Common myeloid progenitor, CD34-positive (primary cell): ENCODE measurements at regions of chr1 and their contacts with region 1.

Region 1: DNA sequence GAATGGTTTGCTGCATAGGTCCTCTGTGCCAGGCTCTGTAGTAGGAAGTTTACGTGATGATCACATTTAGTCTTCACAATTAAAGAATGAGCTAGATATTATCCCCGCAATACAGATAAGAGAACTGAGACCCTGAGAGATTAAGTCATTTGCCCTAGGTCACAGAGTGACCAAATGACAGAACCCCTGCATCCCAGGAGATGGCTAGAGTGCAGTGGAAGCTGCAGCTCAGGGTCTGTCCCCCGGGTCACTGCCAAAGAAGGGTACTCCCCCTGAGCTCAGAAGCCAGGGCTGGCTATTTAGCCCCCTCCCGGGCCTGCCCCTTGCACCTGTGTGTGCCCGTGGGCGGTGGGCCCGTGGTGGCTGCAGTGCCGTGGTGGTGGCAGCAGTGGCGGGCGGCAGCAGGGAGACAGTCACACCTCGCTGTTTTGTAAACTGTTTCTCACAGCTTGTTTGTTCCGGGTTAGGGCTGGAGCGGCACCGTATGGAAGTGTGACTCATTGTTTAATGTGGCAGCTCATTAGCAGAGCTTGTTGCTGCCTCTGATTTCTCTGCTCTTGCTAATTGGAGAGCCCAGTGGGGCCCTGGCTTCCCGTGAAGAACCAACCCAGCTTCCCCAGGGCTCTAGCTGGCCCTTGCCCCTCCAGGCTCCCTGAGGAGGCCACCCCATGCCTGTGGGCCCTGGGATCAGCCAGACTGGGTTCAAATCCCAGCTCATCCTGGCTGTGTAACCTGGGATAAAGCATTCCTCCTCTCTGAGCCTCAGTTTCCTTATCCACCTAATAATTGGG is 19.3 kb upstream of the FOXO6 start:
- DNase-seq: no peak
- H3K4me3 ChIP-seq: no peak overlapping the region
- H3K27ac ChIP-seq: no peak overlapping the region
- H3K4me1 ChIP-seq: peaks cover 0 to 15% (median 13%) of the 10 kb centered on the region in 4 experiments
- H3K27me3 ChIP-seq: no peaks in the 10 kb centered on the region

Region 2: DNA sequence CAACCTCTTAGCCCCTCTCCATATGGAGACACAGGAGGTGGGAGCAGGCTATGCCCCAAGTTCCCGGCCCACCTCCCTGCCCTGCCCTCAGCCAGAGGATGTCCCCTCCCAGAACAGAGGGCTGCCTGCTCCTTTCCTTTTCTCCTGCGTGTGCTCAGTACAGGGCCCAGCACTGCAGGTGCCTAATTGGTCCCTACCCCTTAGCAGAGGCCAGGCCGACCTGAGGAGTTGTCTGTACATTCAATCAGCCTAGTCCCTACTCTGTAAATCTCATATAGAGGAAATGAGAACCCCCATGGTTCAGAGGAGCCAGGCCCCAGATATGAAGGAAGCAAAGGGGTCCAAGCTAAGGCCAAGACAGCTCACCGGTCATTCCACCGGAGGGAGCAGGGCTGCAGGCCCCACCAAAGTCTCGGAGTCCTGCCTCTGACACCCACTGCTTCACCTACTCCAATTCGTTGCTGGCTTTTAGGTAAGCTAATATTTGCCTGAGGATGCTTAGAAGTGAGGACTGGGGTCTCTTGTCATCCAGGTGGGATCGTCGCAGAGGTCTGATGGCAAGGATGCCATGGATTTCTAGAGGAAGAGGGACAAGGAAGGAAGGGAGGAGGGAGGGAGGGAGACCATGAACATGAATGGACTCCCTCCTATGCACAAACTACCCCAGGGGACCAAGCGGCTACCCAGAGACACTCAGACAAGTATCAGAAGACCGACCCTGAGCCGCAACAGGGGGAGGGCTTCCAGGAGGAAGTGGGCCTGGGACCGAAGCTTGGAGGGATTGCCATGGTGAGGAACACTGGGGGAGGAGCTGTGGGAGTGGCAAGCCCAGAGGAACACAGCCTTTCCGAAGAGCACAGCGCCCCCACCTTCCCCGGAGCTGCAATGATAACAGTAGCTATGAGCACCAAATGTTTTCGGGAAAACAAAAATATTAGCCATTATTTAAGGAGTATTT is 11.1 kb before region 1 on chr1:
- CTCF ChIA-PET with region 1: interaction called, 15 read pairs
- POLR2A ChIA-PET with region 1: no interaction called
- DNase-seq: peak in 2 of 3 donors; percentile 20 to 35
- H3K4me3 ChIP-seq: no peak overlapping the region
- H3K27ac ChIP-seq: no peak overlapping the region
- H3K4me1 ChIP-seq: no peaks in the 10 kb centered on the region
- H3K27me3 ChIP-seq: no peaks in the 10 kb centered on the region

Region 3: GRCh38 chr1:41371630-41372599 is 29.9 kb after region 1 on chr1:
- CTCF ChIA-PET with region 1: no interaction called
- POLR2A ChIA-PET with region 1: no interaction called
- DNase-seq: peak in 2 of 3 donors; percentile 51 to 63
- H3K4me3 ChIP-seq: no peak overlapping the region
- H3K27ac ChIP-seq: peak overlapping the region in 1 of 2 experiments; percentile 32
- H3K4me1 ChIP-seq: peaks cover 0 to 36% (median 14%) of the 10 kb centered on the region in 4 experiments
- H3K27me3 ChIP-seq: peaks cover 0 to 15% (median 4%) of the 10 kb centered on the region in 5 experiments